Testis (tissue), 5 donors: ENCODE measurements at regions of chr17 and their contacts with region 1.

Region 1: GRCh38 chr17:42322382-42323267 is 34.3 kb downstream of the STAT5A start:
- DNase-seq: peak; percentile 98
- H3K4me3 ChIP-seq: no peak overlapping the region
- H3K27ac ChIP-seq: peak overlapping the region; percentile 6 to 65
- H3K4me1 ChIP-seq: peaks cover 11% of the 10 kb centered on the region
- H3K27me3 ChIP-seq: no peaks in the 10 kb centered on the region
- CTCF ChIP-seq: peak; percentile 99
- POLR2A ChIP-seq: no peak

Region 2: DNA sequence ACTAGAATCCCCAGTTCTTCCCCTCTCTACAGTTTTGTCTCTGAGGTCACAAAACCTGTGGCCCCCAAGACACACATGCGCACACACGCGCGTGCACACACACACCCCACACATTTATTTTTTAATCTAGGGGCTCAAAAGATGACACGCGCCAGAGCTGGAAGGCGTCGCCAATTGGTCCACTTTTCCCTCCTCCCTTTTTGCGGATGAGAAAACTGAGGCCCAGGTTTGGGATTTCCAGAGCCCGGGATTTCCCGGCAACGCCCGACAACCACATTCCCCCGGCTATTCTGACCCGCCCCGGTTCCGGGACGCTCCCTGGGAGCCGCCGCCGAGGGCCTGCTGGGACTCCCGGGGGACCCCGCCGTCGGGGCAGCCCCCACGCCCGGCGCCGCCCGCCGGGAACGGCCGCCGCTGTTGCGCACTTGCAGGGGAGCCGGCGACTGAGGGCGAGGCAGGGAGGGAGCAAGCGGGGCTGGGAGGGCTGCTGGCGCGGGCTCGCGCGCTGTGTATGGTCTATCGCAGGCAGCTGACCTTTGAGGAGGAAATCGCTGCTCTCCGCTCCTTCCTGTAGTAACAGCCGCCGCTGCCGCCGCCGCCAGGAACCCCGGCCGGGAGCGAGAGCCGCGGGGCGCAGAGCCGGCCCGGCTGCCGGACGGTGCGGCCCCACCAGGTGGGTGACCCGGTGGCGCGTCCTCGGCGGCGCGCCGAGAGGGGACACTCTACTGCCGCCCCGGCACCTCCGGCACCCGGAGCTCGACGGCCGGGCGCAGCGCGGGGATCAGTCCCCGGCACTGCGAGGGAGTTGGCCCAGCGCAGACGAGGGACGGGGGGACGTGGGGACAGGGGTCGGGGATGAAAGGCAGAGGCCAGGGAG is 34.5 kb before region 1 on chr17 and contains the start of gene STAT5A:
- intact Hi-C with region 1: no loop called
- DNase-seq: peak; percentile 91
- H3K4me3 ChIP-seq: peak within 1 kb of the TSS; percentile 65 to 69
- H3K27ac ChIP-seq: peak within 1 kb of the TSS; percentile 85 to 91
- H3K4me1 ChIP-seq: peaks cover 16% of the 10 kb centered on the region
- H3K27me3 ChIP-seq: no peaks in the 10 kb centered on the region
- CTCF ChIP-seq: no peak
- POLR2A ChIP-seq: peak; percentile 35
- total RNA-seq, gene STAT5A: 27.8 to 37.0 TPM

Region 3: DNA sequence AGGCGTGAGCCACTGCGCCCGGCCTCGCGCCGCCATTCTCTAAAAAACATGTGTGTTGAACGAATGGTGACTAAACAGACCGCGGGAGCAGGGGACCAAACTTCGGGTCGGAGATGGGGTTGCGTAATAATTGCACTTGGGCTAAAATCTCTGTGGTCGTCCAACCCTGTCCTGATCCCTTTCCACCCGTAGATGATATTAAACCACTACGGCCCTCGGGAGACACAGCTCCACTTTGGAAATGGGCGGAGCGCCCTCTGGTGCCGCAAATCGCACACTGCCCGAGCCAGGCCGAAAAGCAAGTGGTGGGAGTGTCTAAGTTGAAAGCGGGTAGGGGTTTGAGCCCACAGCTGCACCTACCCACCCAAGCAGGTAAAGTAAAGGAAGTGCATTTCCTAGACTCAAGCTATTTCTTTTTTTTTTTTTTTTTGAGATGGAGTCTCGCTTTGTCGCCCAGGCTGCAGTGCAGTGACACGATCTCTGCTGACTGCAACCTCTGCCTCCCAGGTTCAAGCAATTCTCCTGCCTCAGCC is 83.4 kb after region 1 on chr17:
- intact Hi-C with region 1: loop called (anchors 5 kb)
- DNase-seq: peak; percentile 90
- H3K4me3 ChIP-seq: no peak overlapping the region
- H3K27ac ChIP-seq: peak overlapping the region in 1 of 2 donors; percentile 71
- H3K4me1 ChIP-seq: peaks cover 42% of the 10 kb centered on the region
- H3K27me3 ChIP-seq: no peaks in the 10 kb centered on the region
- CTCF ChIP-seq: peak; percentile 79 to 90 (median 81)
- POLR2A ChIP-seq: no peak

Region 4: GRCh38 chr17:42517516-42517915 is 194.9 kb after region 1 on chr17:
- intact Hi-C with region 1: loop called (anchors 5 kb)
- DNase-seq: peak; percentile 93
- H3K4me3 ChIP-seq: no peak overlapping the region
- H3K27ac ChIP-seq: peak overlapping the region; percentile 93
- H3K4me1 ChIP-seq: peaks cover 91% of the 10 kb centered on the region
- H3K27me3 ChIP-seq: no peaks in the 10 kb centered on the region
- CTCF ChIP-seq: peak; percentile 94 to 97 (median 94)
- POLR2A ChIP-seq: no peak